ENCODE measurements at regions of chr10 and their contacts with region 1.

Region 1: GRCh38 chr10:84139126-84140035 is at the start of gene GHITM:
- DNase-seq: peak; percentile 98 to 100 (median 99)
- H3K4me3 ChIP-seq: peak within 1 kb of the TSS; percentile 68 to 93 (median 86)
- H3K4me3 Mint-ChIP-seq: peak within 1 kb of the TSS; percentile 92 to 96
- H3K27ac ChIP-seq: peak within 1 kb of the TSS; percentile 92 to 93
- H3K27ac Mint-ChIP-seq: peak within 1 kb of the TSS; percentile 97 to 99 (median 99)
- H3K4me1 ChIP-seq: peaks cover 12 to 19% of the 10 kb centered on the region in 2 donors
- H3K4me1 Mint-ChIP-seq: peaks cover 19% of the 10 kb centered on the region
- H3K27me3 ChIP-seq: peaks cover 2 to 8% of the 10 kb centered on the region in 2 donors
- H3K27me3 Mint-ChIP-seq: peaks cover 8 to 10% (median 10%) of the 10 kb centered on the region in 3 donors
- CTCF ChIP-seq: peak; percentile 36
- polyA plus RNA-seq, gene GHITM: 91.4 to 363 (median 312) TPM

Region 2: GRCh38 chr10:84328418-84329195 is 189.2 kb after region 1 on chr10 and contains the start of gene CCSER2:
- intact Hi-C with region 1: loop called (anchors 2 to 5 kb)
- DNase-seq: peak; percentile 86 to 94 (median 93)
- H3K4me3 ChIP-seq: peak within 1 kb of the TSS; percentile 57 to 94 (median 74)
- H3K4me3 Mint-ChIP-seq: peak within 1 kb of the TSS; percentile 86 to 88
- H3K27ac ChIP-seq: peak within 1 kb of the TSS; percentile 8 to 89
- H3K27ac Mint-ChIP-seq: peak within 1 kb of the TSS; percentile 84 to 95 (median 91)
- H3K4me1 ChIP-seq: peaks cover 13 to 21% of the 10 kb centered on the region in 2 donors
- H3K4me1 Mint-ChIP-seq: peaks cover 29% of the 10 kb centered on the region
- H3K27me3 ChIP-seq: no peaks in the 10 kb centered on the region
- H3K27me3 Mint-ChIP-seq: no peaks in the 10 kb centered on the region
- CTCF ChIP-seq: no peak
- polyA plus RNA-seq, gene CCSER2: 7.4 to 23.3 (median 14.3) TPM

Region 3: DNA sequence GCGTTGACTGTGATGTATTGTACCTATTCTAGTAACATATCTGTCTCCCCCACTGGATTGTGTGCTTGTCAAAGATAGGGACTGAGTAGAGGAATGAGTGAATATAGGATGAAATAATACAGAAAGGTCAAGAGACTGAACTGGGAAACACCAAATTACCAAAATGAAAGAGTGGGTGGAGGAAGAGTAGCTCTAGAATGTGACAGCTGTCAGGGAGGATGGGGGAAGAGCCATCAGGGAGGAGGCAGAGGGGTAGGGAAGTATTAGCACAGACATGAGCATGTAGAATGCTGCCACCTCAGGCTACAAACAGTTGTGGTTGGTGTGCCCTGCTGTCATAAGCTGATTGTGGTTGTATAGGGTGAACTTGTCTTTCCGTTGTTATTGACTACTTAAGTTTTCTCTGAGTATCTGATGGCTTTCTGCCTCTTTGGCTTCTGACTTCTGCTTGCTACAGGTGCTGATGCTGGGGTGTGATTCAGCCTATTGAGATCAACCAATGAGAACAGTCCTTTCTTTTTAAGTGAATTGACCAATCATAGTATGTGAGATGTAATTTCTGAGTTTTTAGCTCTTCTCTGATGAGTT is 194.6 kb after region 1 on chr10:
- intact Hi-C with region 1: loop called (anchors 2 to 5 kb)
- DNase-seq: peak; percentile 23 to 60 (median 35)
- H3K4me3 ChIP-seq: no peak overlapping the region
- H3K4me3 Mint-ChIP-seq: no peak overlapping the region
- H3K27ac ChIP-seq: no peak overlapping the region
- H3K27ac Mint-ChIP-seq: no peak overlapping the region
- H3K4me1 ChIP-seq: peaks cover 12 to 21% of the 10 kb centered on the region in 2 donors
- H3K4me1 Mint-ChIP-seq: peaks cover 37% of the 10 kb centered on the region
- H3K27me3 ChIP-seq: no peaks in the 10 kb centered on the region
- H3K27me3 Mint-ChIP-seq: no peaks in the 10 kb centered on the region
- CTCF ChIP-seq: no peak